Mammary epithelial cell (primary cell): ENCODE measurements at regions of chr21 and their contacts with region 1.

Region 1: DNA sequence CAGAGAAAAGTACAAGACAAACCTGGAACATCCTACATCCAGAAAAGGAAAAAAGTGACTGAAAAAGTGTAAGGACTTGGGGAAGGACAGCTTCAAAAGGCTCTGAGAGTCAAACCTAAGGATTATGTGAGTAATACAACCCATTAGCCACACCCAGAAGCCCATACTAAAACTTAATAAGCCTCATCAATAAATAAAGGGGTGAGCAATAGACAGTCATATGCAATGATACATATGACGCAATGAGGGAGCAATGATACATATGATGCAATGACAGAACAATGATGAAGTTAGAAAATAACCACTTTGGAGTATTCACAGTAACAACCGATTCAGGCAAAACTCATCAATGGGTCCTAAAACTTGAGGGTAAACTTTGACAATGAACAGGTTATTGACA is 50.1 kb downstream of the BRWD1 start:
- DNase-seq: peak; percentile 24
- H3K4me3 ChIP-seq: no peak overlapping the region
- H3K27ac ChIP-seq: no peak overlapping the region
- H3K4me1 ChIP-seq: peaks cover 6% of the 10 kb centered on the region
- H3K27me3 ChIP-seq: no peaks in the 10 kb centered on the region
- CTCF ChIP-seq: no peak

Region 2: DNA sequence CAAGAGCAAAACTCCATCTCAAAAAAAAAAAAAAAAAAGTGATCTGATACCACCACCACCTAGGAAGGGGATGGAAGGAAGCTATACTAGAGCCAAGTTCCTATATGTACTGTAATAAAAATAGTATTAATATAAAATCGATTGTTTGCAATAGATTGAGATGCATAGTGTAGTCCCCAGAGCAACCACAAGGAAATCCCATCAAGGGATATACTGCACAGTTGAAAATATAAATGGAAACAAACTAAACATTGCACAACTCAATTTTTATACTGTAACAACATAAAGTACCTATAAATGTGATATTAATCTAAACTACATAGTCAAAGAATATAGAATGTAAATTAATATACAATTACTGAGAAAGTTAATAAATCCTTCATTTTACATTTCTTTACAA is 59.2 kb before region 1 on chr21:
- CTCF ChIA-PET with region 1: no interaction called
- dilution Hi-C with region 1: no loop called
- in situ Hi-C with region 1: no loop called
- intact Hi-C with region 1: no loop called
- DNase-seq: no peak
- H3K4me3 ChIP-seq: no peak overlapping the region
- H3K27ac ChIP-seq: no peak overlapping the region
- H3K4me1 ChIP-seq: no peaks in the 10 kb centered on the region
- H3K27me3 ChIP-seq: no peaks in the 10 kb centered on the region
- CTCF ChIP-seq: peak; percentile 17 to 27

Region 3: DNA sequence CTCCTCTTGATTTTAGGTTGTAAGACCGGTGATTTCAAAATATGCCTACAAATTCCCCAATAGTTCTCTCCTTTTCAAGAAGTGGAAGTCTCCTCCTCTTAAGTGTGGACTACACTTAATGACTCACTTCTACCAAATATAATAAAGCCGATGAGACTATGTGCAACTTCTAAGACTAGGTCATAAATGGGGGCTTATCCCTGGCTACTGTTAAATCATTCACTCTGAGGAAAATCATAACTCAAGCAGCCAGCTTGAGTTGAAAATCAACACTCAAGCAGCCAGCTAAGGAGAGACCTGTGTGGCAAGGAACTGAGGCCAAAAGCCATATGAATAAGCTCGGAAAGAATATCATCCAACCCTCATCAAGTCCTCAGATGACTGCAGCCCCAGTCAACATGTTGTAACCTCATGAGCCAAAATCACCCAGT is 30.5 kb before region 1 on chr21:
- CTCF ChIA-PET with region 1: no interaction called
- dilution Hi-C with region 1: loop called (anchors 5 kb)
- in situ Hi-C with region 1: no loop called
- intact Hi-C with region 1: no loop called
- DNase-seq: no peak
- H3K4me3 ChIP-seq: no peak overlapping the region
- H3K27ac ChIP-seq: no peak overlapping the region
- H3K4me1 ChIP-seq: no peaks in the 10 kb centered on the region
- H3K27me3 ChIP-seq: no peaks in the 10 kb centered on the region
- CTCF ChIP-seq: no peak